Posterior vena cava (tissue), 2 donors: ENCODE measurements at regions of chr2 and their contacts with region 1.

Region 1: GRCh38 chr2:126510960-126511359 is 145.0 kb upstream of the GYPC start:
- DNase-seq: no peak

Region 2: GRCh38 chr2:126449677-126450076 is 61.3 kb before region 1 on chr2:
- intact Hi-C with region 1: no loop called
- DNase-seq: no peak

Region 3: GRCh38 chr2:126482582-126483464 is 28.1 kb before region 1 on chr2:
- intact Hi-C with region 1: loop called in 1 of 2 experiments (anchors 1 kb)
- DNase-seq: peak; percentile 65

Region 4: DNA sequence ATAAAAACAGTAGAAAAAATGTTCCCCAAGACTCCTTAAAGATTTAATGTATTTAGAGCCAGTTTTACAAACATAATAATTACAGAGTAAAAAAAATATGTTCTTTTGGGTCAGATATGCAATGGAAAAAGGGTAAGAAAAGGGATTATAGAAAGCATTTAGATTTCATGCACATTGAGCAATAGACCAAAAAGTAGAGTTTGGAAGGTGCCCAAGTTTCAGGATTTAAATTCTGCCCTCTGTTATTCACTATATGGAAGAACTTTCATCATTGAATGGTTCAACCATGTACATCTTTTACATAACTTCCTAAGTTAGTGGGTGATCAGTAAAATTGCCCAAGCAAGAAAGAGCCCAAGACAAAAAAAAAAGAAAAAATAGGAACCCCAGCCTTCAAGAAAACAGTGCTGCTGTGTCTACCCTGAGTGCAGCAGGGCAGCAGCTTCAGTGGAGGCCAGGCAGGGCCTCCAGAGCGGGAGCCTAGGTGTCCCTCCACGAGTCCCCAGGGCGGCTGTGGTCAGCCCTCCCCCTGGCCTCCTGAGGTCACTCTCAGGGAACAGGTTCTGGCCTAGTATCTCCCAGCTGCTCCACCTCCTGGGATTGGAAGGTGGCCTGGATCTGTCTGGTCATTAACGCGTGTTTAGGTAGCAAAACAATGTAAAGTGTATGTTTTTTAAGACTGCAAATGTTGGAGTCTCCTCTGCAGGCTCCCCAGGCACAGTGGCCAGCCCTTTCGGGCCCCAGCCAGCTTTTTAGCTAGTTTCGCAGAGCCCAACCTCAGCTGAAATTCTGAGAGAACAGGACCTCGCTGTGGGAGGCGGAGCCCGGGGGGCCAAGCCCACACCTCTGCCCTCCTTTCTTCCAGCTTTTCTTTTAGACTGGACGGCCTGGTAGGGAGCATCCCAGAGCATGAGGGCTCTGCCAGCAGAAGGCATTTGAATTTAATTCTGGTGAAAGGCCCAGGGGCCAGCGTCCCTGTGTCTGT is 465.0 kb after region 1 on chr2:
- intact Hi-C with region 1: no loop called
- DNase-seq: no peak